Endothelial cell of umbilical vein (primary cell): ENCODE measurements at regions of chr11 and their contacts with region 1.

Region 1: GRCh38 chr11:78645226-78646202 is 70.8 kb upstream of the NARS2 start:
- DNase-seq: peak; percentile 60
- H3K4me3 ChIP-seq: no peak overlapping the region
- H3K27ac ChIP-seq: no peak overlapping the region
- H3K4me1 ChIP-seq: no peaks in the 10 kb centered on the region
- H3K27me3 ChIP-seq: peaks cover 0 to 2% of the 10 kb centered on the region in 2 experiments
- CTCF ChIP-seq: peak; percentile 87 to 93
- POLR2A ChIP-seq: no peak

Region 2: GRCh38 chr11:78514922-78515502 is 130.5 kb before region 1 on chr11:
- CTCF ChIA-PET with region 1: no interaction called
- POLR2A ChIA-PET with region 1: no interaction called
- dilution Hi-C with region 1: no loop called
- intact Hi-C with region 1: no loop called
- DNase-seq: no peak
- H3K4me3 ChIP-seq: no peak overlapping the region
- H3K27ac ChIP-seq: no peak overlapping the region
- H3K4me1 ChIP-seq: peaks cover 8% of the 10 kb centered on the region
- H3K27me3 ChIP-seq: no peaks in the 10 kb centered on the region
- CTCF ChIP-seq: no peak
- POLR2A ChIP-seq: no peak

Region 3: DNA sequence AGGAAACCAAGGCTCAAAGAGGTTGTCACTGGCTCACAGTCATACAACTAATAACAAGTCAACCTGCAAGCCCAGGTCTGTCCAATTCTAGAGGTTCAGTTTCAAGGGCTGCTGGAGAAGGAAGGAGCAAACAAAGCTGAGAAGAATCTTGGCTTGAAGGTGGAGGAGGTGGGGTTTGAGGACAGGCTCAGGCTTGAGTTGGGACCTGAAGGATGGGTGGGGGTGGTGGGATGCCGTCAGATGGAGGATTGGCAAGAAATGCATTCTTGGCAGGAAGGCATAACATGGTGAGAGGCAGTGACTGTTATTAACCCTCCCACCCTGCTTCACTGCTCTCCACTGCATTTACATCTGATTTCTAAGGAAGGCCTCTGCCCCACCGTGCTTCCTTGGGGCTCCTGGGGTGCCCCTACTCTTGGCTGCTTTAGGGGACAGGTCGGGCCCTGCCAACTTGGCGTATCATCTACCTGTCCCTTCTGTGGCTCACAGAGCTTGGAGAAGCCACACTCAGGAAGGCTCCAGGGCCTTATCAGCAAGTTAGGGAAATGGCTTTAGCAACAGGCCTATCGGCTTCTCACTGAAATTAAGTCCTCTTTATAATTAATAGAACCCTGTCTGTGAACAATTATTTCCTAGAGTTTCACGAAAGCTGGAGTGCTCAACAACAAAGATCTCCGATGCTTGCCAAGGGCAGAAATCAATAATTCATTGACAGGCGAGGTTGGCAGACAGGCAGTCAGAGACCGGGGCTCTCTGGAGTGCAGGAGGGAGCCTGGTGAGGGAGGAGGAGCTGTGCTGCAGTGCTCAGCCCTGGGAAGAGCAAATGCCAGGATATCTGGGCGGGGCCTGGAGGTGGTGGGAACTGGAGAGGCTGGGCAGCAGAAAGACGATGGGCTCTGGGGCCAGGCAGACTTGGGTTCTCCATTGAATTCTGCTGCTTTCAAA is 14.1 kb after region 1 on chr11:
- CTCF ChIA-PET with region 1: interaction called, 13 read pairs
- POLR2A ChIA-PET with region 1: no interaction called
- dilution Hi-C with region 1: no loop called
- intact Hi-C with region 1: no loop called
- DNase-seq: no peak
- H3K4me3 ChIP-seq: no peak overlapping the region
- H3K27ac ChIP-seq: no peak overlapping the region
- H3K4me1 ChIP-seq: no peaks in the 10 kb centered on the region
- H3K27me3 ChIP-seq: no peaks in the 10 kb centered on the region
- CTCF ChIP-seq: no peak
- POLR2A ChIP-seq: no peak

Region 4: GRCh38 chr11:78787696-78788095 is 142.2 kb after region 1 on chr11:
- CTCF ChIA-PET with region 1: no interaction called
- POLR2A ChIA-PET with region 1: no interaction called
- dilution Hi-C with region 1: no loop called
- intact Hi-C with region 1: no loop called
- DNase-seq: no peak
- H3K4me3 ChIP-seq: no peak overlapping the region
- H3K27ac ChIP-seq: no peak overlapping the region
- H3K4me1 ChIP-seq: no peaks in the 10 kb centered on the region
- H3K27me3 ChIP-seq: no peaks in the 10 kb centered on the region
- CTCF ChIP-seq: no peak
- POLR2A ChIP-seq: no peak

Region 5: DNA sequence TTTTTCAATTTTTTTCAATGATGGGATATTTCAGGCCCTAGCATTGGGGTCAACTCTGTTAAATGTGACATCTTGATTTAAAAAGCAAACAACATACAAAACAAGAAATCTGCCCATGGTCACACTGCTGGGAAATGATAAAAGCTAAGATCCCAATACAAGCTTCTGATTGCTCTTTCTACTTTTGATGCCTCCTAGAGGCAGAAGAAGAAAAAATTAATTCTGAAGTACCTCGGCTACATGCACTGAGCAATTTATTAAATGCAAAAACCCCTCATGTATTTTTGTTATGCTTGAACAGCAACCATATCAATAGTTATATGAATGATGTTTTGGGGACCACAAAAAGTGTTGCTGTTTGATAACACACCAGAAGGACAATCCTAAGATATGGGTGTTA is 271.2 kb after region 1 on chr11:
- CTCF ChIA-PET with region 1: interaction called, 12 read pairs
- POLR2A ChIA-PET with region 1: no interaction called
- dilution Hi-C with region 1: no loop called
- intact Hi-C with region 1: no loop called
- DNase-seq: no peak
- H3K4me3 ChIP-seq: no peak overlapping the region
- H3K27ac ChIP-seq: no peak overlapping the region
- H3K4me1 ChIP-seq: no peaks in the 10 kb centered on the region
- H3K27me3 ChIP-seq: no peaks in the 10 kb centered on the region
- CTCF ChIP-seq: no peak
- POLR2A ChIP-seq: no peak

Region 6: DNA sequence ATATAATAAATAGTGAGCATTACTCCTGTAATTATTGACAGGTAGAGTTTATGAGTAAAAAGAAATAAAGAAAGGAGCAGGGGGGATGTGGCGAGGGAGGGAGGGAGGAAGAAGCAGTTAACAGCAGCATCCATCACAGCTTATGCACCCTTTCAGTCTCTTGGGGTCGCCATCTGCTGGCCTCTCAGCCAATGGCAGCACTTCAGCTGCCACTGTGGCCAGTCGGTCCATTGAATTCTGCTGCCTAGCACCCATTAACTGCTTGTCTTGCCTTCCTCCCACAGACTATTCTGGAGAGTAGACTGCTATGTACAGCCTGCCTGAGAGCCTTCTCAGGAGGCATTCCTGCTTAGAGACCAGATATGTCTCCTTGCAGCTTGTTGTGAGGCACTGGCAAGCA is 407.0 kb after region 1 on chr11:
- CTCF ChIA-PET with region 1: interaction called, 74 read pairs
- POLR2A ChIA-PET with region 1: no interaction called
- dilution Hi-C with region 1: no loop called
- intact Hi-C with region 1: loop called (anchors 5 kb)
- DNase-seq: peak; percentile 28
- H3K4me3 ChIP-seq: no peak overlapping the region
- H3K27ac ChIP-seq: no peak overlapping the region
- H3K4me1 ChIP-seq: no peaks in the 10 kb centered on the region
- H3K27me3 ChIP-seq: peaks cover 9 to 14% of the 10 kb centered on the region in 2 experiments
- CTCF ChIP-seq: peak in 1 of 2 donors; percentile 66
- POLR2A ChIP-seq: no peak

Region 7: GRCh38 chr11:79071190-79071589 is 425.7 kb after region 1 on chr11:
- CTCF ChIA-PET with region 1: interaction called, 68 read pairs
- POLR2A ChIA-PET with region 1: no interaction called
- dilution Hi-C with region 1: no loop called
- intact Hi-C with region 1: loop called (anchors 1 kb)
- DNase-seq: no peak
- H3K4me3 ChIP-seq: no peak overlapping the region
- H3K27ac ChIP-seq: no peak overlapping the region
- H3K4me1 ChIP-seq: no peaks in the 10 kb centered on the region
- H3K27me3 ChIP-seq: no peaks in the 10 kb centered on the region
- CTCF ChIP-seq: no peak
- POLR2A ChIP-seq: no peak

Region 8: GRCh38 chr11:79100093-79100910 is 454.8 kb after region 1 on chr11:
- CTCF ChIA-PET with region 1: interaction called, 213 read pairs
- POLR2A ChIA-PET with region 1: no interaction called
- dilution Hi-C with region 1: no loop called
- intact Hi-C with region 1: loop called (anchors 1 kb)
- DNase-seq: peak; percentile 68
- H3K4me3 ChIP-seq: no peak overlapping the region
- H3K27ac ChIP-seq: no peak overlapping the region
- H3K4me1 ChIP-seq: peaks cover 8% of the 10 kb centered on the region
- H3K27me3 ChIP-seq: no peaks in the 10 kb centered on the region
- CTCF ChIP-seq: peak; percentile 78
- POLR2A ChIP-seq: no peak

Region 9: DNA sequence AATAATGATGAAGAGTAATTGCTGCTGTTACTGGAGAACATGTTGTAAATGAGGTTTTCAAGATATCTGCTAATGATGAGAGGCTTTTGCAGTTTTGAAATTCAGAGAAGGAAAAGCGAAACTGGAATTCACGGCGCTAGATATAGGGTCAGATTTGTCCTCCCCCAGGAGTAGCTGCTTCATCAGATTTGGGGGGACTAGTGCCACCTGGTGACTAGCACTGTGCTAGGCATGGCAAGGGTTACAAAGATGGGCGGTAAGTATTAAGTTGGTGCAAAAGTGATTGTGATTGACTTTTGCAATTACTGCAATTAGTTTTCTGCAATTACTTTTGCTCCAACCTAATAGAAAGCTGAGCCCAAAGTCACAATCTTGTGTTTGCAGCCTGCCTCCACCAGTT is 1675.3 kb after region 1 on chr11:
- CTCF ChIA-PET with region 1: interaction called, 12 read pairs
- POLR2A ChIA-PET with region 1: no interaction called
- dilution Hi-C with region 1: no loop called
- intact Hi-C with region 1: no loop called
- DNase-seq: no peak
- H3K4me3 ChIP-seq: no peak overlapping the region
- H3K27ac ChIP-seq: no peak overlapping the region
- H3K4me1 ChIP-seq: peaks cover 5% of the 10 kb centered on the region
- H3K27me3 ChIP-seq: peaks cover 0 to 2% of the 10 kb centered on the region in 2 experiments
- CTCF ChIP-seq: peak in 1 of 2 donors; percentile 14
- POLR2A ChIP-seq: no peak